ENCODE measurements at regions of chr5 and their contacts with region 1.

Region 1: DNA sequence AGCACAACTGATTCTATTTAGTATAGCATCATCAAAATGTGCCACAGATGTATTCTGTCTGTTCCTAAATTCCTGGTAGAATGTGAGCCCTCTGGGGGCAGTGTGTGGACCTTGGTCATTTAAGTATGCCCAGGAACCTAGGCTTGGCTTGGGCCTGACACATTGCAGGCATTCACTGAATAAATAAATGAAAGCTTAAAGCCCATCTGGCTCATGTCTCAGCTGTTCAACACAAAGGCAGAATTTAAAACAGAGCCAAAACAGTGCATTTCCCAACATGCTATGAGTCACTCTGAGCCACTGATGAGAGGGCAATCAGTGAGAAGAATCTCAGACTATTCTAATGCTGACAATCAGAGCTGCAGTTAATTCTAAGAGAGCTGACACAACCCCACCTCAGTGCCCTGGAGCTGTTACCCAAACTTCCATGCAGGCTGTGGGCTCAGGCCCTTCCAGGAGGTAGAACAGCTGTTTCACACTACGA is 8.1 kb downstream of the FAM193B start:
- DNase-seq: peak in 1 of 4 experiments; percentile 18
- ATAC-seq: peak; percentile 66
- H3K4me3 ChIP-seq: no peak overlapping the region
- H3K27ac ChIP-seq: no peak overlapping the region
- H3K4me1 ChIP-seq: peaks cover 0 to 9% of the 10 kb centered on the region in 2 experiments; a peak in 4 of 5 replicates
- H3K27me3 ChIP-seq: no peaks in the 10 kb centered on the region
- CTCF ChIP-seq: no peak
- EP300 ChIP-seq: no peak
- POLR2A ChIP-seq: no peak
- RAD21 ChIP-seq: no peak

Region 2: GRCh38 chr5:177077335-177077734 is 469.0 kb before region 1 on chr5:
- CTCF ChIA-PET with region 1: no interaction called
- POLR2A ChIA-PET with region 1: no interaction called
- in situ Hi-C with region 1: no loop called
- intact Hi-C with region 1: no loop called
- DNase-seq: no peak
- ATAC-seq: peak; percentile 75
- H3K4me3 ChIP-seq: no peak overlapping the region
- H3K27ac ChIP-seq: no peak overlapping the region
- H3K4me1 ChIP-seq: peaks cover 0 to 5% of the 10 kb centered on the region in 2 experiments; a peak in 2 of 5 replicates
- H3K27me3 ChIP-seq: no peaks in the 10 kb centered on the region
- CTCF ChIP-seq: no peak
- EP300 ChIP-seq: no peak
- POLR2A ChIP-seq: no peak
- RAD21 ChIP-seq: no peak

Region 3: DNA sequence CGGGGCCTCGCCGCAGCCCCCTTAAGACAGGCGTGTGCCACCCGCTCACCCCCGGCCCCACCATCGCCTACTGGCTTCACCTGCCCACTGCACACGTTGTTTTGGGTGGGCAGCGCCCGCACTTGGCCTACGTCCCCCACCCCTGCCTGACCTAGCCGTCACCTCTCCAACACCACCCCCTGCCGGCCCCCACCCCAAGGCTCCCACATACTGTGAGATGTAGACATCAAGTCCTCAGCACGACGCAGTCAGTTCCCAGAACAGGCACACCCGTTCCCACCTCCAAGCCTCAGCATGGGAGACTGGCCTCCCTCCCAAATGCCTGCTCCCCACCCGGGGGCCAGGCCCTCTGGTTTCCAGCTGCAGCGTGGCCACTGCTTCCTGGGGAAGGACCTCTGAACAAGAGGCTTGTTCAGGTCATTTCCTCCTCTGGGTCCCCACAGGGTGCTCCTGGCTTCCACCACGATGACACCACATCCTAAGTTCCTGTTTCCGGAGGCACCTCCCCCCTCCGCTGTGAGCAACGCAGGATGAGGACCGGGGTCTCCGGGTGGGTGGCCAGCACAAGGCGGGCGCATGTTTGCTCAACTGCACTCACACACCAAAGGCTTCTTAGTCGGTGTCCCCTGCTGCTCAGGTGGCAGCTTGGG is 84.2 kb before region 1 on chr5:
- CTCF ChIA-PET with region 1: no interaction called
- POLR2A ChIA-PET with region 1: no interaction called
- in situ Hi-C with region 1: no loop called
- intact Hi-C with region 1: no loop called
- DNase-seq: peak in 1 of 4 experiments; percentile 55
- ATAC-seq: peak; percentile 45
- H3K4me3 ChIP-seq: no peak overlapping the region
- H3K27ac ChIP-seq: peak overlapping the region; percentile 60
- H3K4me1 ChIP-seq: peaks cover 8 to 38% of the 10 kb centered on the region in 2 experiments
- H3K27me3 ChIP-seq: no peaks in the 10 kb centered on the region
- CTCF ChIP-seq: no peak
- EP300 ChIP-seq: no peak
- POLR2A ChIP-seq: no peak
- RAD21 ChIP-seq: no peak

Region 4: DNA sequence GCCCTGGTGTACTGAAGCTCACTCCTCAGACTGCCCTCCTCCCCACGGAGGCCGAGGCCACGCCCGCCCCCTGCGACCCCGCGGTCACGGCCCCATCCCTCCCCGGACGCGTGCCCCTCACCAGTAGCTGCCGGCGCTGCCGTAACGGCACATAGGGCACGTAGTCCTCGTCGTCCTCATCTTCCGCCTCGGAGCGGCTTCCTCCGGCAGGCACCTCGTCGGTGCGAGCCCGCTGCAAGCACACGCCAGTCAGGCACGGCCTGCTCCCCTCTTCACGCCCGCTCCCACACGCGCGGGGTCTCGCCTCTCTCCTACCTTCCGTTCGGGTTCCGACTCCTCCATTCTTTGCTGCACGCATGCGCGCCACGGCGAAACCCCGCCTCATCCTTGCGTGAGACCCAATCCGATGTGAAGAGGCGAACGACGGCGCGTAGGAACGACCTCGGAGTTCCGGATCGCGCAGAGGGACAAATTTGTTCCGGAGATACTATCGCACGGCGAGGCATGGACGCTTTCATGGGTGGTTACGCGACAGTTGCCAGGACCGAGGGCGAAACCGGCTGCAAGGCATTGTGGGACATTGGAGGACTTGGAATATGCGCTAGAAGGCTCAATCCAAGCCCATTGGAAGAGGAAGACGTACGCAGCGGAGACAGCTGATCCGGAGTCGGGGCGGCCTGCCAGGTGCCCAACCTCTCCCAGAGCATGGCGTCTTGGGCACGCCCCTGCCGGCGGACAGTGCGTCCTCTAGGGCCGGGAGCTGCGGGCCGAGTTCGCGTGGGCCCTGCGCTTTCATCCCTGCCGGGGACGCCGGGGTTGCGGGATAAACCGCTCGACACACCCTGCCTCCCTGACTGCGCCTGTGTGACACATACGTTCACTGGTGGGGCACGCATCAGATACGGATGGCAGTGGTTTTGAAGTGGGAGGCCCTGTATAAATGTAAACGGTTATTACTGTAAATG is 29.4 kb before region 1 on chr5 and contains the start of gene DDX41:
- CTCF ChIA-PET with region 1: no interaction called
- POLR2A ChIA-PET with region 1: interaction called, 5 read pairs
- in situ Hi-C with region 1: no loop called
- intact Hi-C with region 1: loop called (anchors 2 kb)
- DNase-seq: peak; percentile 93 to 99 (median 96)
- ATAC-seq: peak; percentile 92
- H3K4me3 ChIP-seq: peak within 1 kb of the TSS; percentile 77
- H3K27ac ChIP-seq: peak within 1 kb of the TSS; percentile 79
- H3K4me1 ChIP-seq: peaks cover 9 to 42% of the 10 kb centered on the region in 2 experiments; a peak in 4 of 5 replicates
- H3K27me3 ChIP-seq: no peaks in the 10 kb centered on the region
- CTCF ChIP-seq: no peak
- EP300 ChIP-seq: peak; percentile 67
- POLR2A ChIP-seq: peak; percentile 94
- RAD21 ChIP-seq: peak in 1 of 2 experiments; percentile 1; a peak in 1 of 4 replicates
- polyA plus RNA-seq, gene DDX41: 38.2 to 60.1 TPM

Region 5: DNA sequence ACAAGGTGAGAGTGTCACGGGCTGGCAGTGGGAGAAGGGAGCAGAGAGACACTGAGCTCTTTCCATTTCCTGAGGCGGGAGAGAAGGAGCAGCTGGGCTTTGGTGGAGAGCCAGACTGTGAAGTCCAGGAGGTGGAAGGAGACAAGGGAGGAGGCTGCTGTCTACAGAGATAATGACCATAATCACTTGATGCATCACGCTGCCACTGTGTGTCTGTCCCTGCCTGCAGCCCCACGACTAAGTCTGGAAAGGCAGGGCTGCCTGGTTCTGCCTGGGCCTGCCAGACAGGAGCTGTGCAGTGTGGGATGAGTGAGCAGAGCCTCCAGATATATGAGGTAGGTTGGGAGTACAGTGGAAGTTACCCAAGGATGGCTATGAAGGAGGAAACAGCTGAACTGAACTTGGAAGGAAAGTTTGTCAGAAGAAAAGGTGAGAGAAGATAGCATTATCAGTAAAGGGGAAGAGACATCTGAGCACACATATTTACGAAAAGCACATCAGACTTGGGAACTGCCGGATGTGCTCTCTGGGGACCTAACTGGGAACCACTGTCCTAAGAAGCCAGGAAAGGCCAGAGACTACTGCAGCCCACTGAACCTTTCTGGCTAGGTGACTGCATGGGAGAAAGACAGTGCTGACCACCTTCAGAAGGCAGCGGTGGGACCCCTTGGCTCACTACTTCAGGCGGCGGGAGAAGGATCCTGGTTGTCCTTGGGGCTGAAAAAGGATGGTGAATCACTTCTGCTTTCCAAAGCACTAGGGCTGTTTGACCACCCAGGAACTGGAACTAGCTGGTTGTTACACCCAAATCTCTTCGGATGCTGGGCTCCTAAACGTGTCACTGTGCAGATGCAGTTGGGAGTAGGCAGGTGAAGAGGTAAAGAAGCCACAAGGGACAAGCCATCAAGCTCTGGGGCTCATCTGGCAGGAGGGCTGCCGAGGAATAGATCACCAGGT is 16.8 kb before region 1 on chr5:
- CTCF ChIA-PET with region 1: no interaction called
- POLR2A ChIA-PET with region 1: interaction called, 28 read pairs
- in situ Hi-C with region 1: no loop called
- intact Hi-C with region 1: no loop called
- DNase-seq: peak; percentile 43 to 87 (median 64)
- ATAC-seq: peak; percentile 87
- H3K4me3 ChIP-seq: no peak overlapping the region
- H3K27ac ChIP-seq: peak overlapping the region; percentile 9; the same call in 2 of the 3 replicates
- H3K4me1 ChIP-seq: peaks cover 24 to 30% of the 10 kb centered on the region in 2 experiments
- H3K27me3 ChIP-seq: no peaks in the 10 kb centered on the region
- CTCF ChIP-seq: no peak
- EP300 ChIP-seq: peak; percentile 66; the same call in 1 of the 2 replicates
- POLR2A ChIP-seq: no peak
- RAD21 ChIP-seq: no peak

Region 6: GRCh38 chr5:177535125-177535524 is 11.2 kb before region 1 on chr5:
- CTCF ChIA-PET with region 1: no interaction called
- POLR2A ChIA-PET with region 1: interaction called, 28 read pairs
- in situ Hi-C with region 1: no loop called
- intact Hi-C with region 1: no loop called
- DNase-seq: no peak
- ATAC-seq: no peak
- H3K4me3 ChIP-seq: no peak overlapping the region
- H3K27ac ChIP-seq: no peak overlapping the region
- H3K4me1 ChIP-seq: peaks cover 7 to 9% of the 10 kb centered on the region in 2 experiments
- H3K27me3 ChIP-seq: no peaks in the 10 kb centered on the region
- CTCF ChIP-seq: no peak
- EP300 ChIP-seq: no peak
- POLR2A ChIP-seq: no peak
- RAD21 ChIP-seq: no peak

Region 7: GRCh38 chr5:178086276-178086675 is 540.0 kb after region 1 on chr5:
- CTCF ChIA-PET with region 1: no interaction called
- POLR2A ChIA-PET with region 1: no interaction called
- in situ Hi-C with region 1: no loop called
- intact Hi-C with region 1: no loop called
- DNase-seq: peak in 1 of 4 experiments; percentile 15
- ATAC-seq: no peak
- H3K4me3 ChIP-seq: no peak overlapping the region
- H3K27ac ChIP-seq: no peak overlapping the region
- H3K4me1 ChIP-seq: peaks cover 7 to 11% of the 10 kb centered on the region in 2 experiments; a peak in 4 of 5 replicates
- H3K27me3 ChIP-seq: peaks cover 2 to 31% of the 10 kb centered on the region in 2 experiments; a peak in 2 of 5 replicates
- CTCF ChIP-seq: no peak
- EP300 ChIP-seq: no peak
- POLR2A ChIP-seq: no peak
- RAD21 ChIP-seq: no peak

Measured in K562 (cell line).